ENCODE measurements at regions of chr17 and their contacts with region 1.

Region 1: GRCh38 chr17:40559954-40560591 is 5.2 kb downstream of the CCR7 start:
- DNase-seq: peak; percentile 84 to 91 (median 87)
- ATAC-seq: peak; percentile 72 to 85 (median 83)
- H3K4me3 ChIP-seq: peak overlapping the region in 7 of 12 donors; percentile 6 to 48 (median 30)
- H3K27ac ChIP-seq: peak overlapping the region in 11 of 12 donors; percentile 47 to 92 (median 71)
- H3K4me1 ChIP-seq: peaks cover 12 to 68% (median 44%) of the 10 kb centered on the region in 12 donors
- H3K27me3 ChIP-seq: peaks cover 0 to 10% (median 0%) of the 10 kb centered on the region in 9 donors
- CTCF ChIP-seq: peak; percentile 93 to 99 (median 98)
- POLR2A ChIP-seq: peak in 1 of 2 donors; percentile 27

Region 2: GRCh38 chr17:40399185-40399584 is 160.9 kb before region 1 on chr17:
- intact Hi-C with region 1: loop called in 8 of 10 experiments (anchors 1 to 5 kb)
- DNase-seq: no peak
- ATAC-seq: peak in 2 of 4 donors; percentile 44 to 70
- H3K4me3 ChIP-seq: no peak overlapping the region
- H3K27ac ChIP-seq: no peak overlapping the region
- H3K4me1 ChIP-seq: no peaks in the 10 kb centered on the region
- H3K27me3 ChIP-seq: no peaks in the 10 kb centered on the region
- CTCF ChIP-seq: peak; percentile 49 to 74 (median 58)
- POLR2A ChIP-seq: no peak

Region 3: DNA sequence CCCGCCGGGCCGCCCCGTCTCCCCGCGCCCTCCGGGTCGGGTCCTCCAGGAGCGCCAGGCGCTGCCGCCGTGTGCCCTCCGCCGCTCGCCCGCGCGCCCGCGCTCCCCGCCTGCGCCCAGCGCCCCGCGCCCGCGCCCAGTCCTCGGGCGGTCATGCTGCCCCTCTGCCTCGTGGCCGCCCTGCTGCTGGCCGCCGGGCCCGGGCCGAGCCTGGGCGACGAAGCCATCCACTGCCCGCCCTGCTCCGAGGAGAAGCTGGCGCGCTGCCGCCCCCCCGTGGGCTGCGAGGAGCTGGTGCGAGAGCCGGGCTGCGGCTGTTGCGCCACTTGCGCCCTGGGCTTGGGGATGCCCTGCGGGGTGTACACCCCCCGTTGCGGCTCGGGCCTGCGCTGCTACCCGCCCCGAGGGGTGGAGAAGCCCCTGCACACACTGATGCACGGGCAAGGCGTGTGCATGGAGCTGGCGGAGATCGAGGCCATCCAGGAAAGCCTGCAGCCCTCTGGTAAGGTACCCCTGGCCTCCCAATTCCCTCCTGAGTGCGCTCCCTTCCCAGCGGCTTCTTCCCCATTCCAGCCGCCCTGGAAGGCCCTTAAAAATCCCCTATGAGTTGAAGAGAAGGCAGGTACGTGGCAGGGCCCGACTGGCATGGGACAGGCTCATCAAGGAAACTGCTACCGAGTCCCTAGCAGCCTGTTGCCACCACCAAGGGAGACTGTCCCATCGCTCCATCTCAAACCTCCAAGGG is 116.3 kb before region 1 on chr17:
- intact Hi-C with region 1: loop called in 9 of 10 experiments (anchors 2 to 10 kb)
- DNase-seq: peak; percentile 80 to 92 (median 83)
- ATAC-seq: peak in 3 of 4 donors; percentile 48 to 58 (median 50)
- H3K4me3 ChIP-seq: peak overlapping the region; percentile 46 to 92 (median 74)
- H3K27ac ChIP-seq: peak overlapping the region; percentile 86 to 98 (median 96)
- H3K4me1 ChIP-seq: peaks cover 0 to 57% (median 39%) of the 10 kb centered on the region in 12 donors
- H3K27me3 ChIP-seq: no peaks in the 10 kb centered on the region
- CTCF ChIP-seq: peak in 10 of 12 donors; percentile 12 to 56 (median 40)
- POLR2A ChIP-seq: no peak

Region 4: DNA sequence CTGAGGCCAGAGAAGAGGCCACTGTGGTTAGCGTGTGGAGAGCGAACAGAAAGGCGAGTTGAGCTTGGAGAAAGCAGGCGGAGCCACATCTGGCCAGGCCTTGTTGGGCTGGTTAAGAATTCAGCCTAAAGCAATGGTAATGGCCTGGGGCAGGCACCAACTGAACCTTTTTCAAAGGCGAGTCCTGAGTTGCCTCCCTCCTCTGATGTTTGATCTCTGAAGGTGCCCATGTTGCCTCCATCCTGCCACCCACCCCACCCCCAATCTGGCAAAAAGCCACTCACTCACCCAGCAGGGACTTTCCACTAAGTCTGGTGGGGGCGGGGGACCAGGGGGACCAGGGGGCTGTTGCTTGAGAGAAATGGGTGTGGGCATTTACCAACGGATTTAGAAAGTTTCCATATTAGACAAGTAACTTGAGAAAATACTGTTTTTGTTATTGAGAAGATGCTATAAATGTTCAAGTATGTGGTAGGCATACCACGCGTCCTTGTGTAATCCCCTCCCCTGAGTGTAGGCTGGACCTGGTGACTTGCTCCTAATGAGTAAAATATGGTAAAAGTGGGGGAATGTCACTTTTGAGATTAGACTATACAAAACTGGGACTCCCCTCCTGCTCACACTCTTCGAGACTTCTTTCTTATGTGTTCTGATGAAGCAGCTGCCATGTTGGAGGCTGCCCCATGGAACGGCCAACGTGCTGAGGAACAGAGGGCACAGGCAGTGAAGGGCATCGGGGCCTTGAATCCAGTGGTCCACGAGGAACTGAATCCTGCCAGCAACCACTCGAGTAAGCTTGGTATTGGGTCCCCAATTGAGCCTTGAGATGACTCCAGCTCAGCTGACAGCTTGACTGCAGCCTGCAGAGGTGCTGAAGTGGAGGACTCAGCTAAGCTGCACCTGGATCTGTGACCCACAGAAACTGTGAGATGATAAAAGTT is 28.8 kb before region 1 on chr17:
- intact Hi-C with region 1: loop called in 3 of 10 experiments (anchors 1 to 2 kb)
- DNase-seq: peak in 1 of 5 donors; percentile 19
- ATAC-seq: no peak
- H3K4me3 ChIP-seq: no peak overlapping the region
- H3K27ac ChIP-seq: peak overlapping the region in 6 of 12 donors; percentile 22 to 84 (median 75)
- H3K4me1 ChIP-seq: peaks cover 0 to 48% (median 26%) of the 10 kb centered on the region in 12 donors
- H3K27me3 ChIP-seq: no peaks in the 10 kb centered on the region
- CTCF ChIP-seq: no peak
- POLR2A ChIP-seq: no peak

Region 5: GRCh38 chr17:40542558-40543411 is 17.3 kb before region 1 on chr17:
- intact Hi-C with region 1: loop called in 2 of 10 experiments (anchors 1 to 2 kb)
- DNase-seq: peak; percentile 81 to 90 (median 83)
- ATAC-seq: peak; percentile 83 to 90 (median 88)
- H3K4me3 ChIP-seq: no peak overlapping the region
- H3K27ac ChIP-seq: peak overlapping the region; percentile 74 to 98 (median 92)
- H3K4me1 ChIP-seq: peaks cover 29 to 73% (median 59%) of the 10 kb centered on the region in 12 donors
- H3K27me3 ChIP-seq: no peaks in the 10 kb centered on the region
- CTCF ChIP-seq: no peak
- POLR2A ChIP-seq: no peak

Region 6: GRCh38 chr17:40596261-40596919 is 36.3 kb after region 1 on chr17:
- intact Hi-C with region 1: no loop called
- DNase-seq: no peak
- ATAC-seq: no peak
- H3K4me3 ChIP-seq: no peak overlapping the region
- H3K27ac ChIP-seq: no peak overlapping the region
- H3K4me1 ChIP-seq: peaks cover 0 to 20% (median 0%) of the 10 kb centered on the region in 12 donors
- H3K27me3 ChIP-seq: no peaks in the 10 kb centered on the region
- CTCF ChIP-seq: no peak
- POLR2A ChIP-seq: no peak